ENCODE measurements at regions of chr16 and their contacts with region 1.

Region 1: GRCh38 chr16:24041826-24042631 is 206.2 kb downstream of the PRKCB start:
- DNase-seq: peak; percentile 73
- ATAC-seq: no peak

Region 2: DNA sequence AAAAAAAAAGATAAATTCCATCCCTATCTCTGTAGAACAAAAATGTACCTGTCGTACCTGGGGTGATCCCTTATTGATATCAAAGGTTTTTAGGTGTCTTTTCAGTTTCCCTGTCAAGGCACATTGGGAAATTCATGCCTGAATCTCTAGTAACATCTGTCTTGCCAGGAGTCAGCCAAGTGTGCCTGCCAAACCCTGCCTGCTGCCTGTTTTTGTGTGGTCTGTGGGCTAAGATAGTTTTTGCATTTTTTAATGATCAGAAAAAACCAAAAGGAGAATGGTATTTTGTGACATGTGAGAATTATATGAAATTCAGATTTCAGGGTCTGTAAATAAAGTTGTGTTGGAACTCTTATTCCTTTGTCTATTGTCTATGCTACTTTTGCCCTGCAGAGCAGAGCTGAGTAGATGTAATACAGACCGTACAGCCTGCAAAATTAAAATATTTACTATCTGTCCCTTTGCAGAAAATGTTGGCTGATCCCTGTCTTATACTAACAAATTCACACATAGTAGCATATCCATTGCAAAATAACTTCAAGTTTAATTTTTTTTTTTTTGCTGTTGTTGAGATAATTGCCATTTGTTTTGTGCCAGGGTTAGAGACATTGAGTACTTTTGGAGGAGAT is 300.2 kb before region 1 on chr16:
- intact Hi-C with region 1: no loop called
- DNase-seq: no peak
- ATAC-seq: no peak

Region 3: DNA sequence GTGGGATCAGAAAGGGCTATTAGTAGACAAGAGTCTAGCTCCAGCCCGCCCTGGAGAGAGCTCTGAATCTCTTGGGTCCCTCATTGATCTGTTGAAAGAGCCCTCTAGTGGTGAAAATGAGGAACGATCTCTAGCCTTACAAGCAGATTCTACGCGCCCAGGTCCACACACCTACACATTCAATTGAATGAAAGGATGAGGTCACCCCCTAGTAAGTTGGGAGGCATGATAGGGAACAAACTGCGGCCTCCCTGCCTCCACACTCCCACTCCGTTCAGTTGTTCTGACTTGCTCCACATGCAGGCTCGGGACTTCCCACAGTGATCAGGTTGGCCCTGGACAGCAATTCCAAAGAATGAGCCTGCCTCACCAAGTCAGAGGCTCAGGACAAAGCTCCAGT is 211.2 kb after region 1 on chr16:
- intact Hi-C with region 1: loop called (anchors 10 kb)
- DNase-seq: no peak
- ATAC-seq: no peak

Region 4: DNA sequence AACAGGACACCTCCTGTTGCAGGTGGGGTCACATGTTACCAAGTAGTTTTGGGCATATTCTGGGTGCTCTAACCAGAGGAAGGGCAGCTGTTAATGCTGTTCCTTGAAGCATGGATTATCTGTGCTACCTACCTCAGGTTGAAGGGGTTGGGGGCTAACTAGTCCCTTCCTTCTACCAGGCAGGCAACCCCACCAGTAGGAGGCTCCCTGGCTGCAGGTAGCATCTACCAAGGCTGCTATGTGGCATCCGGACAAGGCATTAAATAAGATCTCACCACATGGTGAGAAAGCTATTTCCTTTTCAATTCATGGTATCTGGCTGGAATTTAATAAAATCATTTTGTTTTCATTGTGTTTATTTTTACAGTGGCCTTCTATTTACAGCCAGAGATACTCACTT is 276.6 kb after region 1 on chr16:
- intact Hi-C with region 1: no loop called
- DNase-seq: no peak
- ATAC-seq: no peak

Region 5: GRCh38 chr16:24504472-24505345 is 462.7 kb after region 1 on chr16:
- intact Hi-C with region 1: loop called (anchors 10 kb)
- DNase-seq: peak; percentile 61
- ATAC-seq: peak; percentile 86

Measured in sciatic nerve (tissue), 2 donors.